Naive thymus-derived CD4-positive, alpha-beta T cell (primary cell): ENCODE measurements at regions of chr1 and their contacts with region 1.

Region 1: GRCh38 chr1:64136752-64137411 is 66.5 kb upstream of the UBE2U start:
- DNase-seq: peak; percentile 37 to 72 (median 58)
- ATAC-seq: peak; percentile 83
- H3K4me3 ChIP-seq: no peak overlapping the region
- H3K4me3 Mint-ChIP-seq: no peak overlapping the region
- H3K27ac ChIP-seq: no peak overlapping the region
- H3K27ac Mint-ChIP-seq: no peak overlapping the region
- H3K4me1 ChIP-seq: no peaks in the 10 kb centered on the region
- H3K4me1 Mint-ChIP-seq: no peaks in the 10 kb centered on the region
- H3K27me3 ChIP-seq: no peaks in the 10 kb centered on the region
- H3K27me3 Mint-ChIP-seq: peaks cover 0 to 12% (median 0%) of the 10 kb centered on the region in 5 donors

Region 2: DNA sequence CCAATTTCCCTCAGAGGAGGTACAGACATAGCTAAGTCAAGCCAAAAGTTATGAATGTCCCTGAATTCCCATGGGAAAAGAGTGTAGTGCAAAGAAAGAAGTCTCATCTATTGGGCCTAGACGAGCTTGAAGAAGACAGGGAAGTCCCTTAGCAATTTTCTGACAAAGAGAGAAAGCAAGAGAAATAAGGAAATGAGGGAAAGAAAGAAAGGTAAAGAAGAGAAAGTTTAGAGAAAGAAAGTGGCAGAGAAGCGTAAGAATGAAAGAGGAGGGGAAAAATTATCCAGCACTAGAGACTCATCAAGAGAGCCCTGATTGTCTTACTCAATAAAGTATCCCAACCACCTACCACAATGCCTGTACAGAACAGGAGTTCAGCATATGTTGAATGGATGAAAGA is 855.1 kb before region 1 on chr1:
- CTCF ChIA-PET with region 1: no interaction called
- POLR2A ChIA-PET with region 1: no interaction called
- intact Hi-C with region 1: no loop called
- DNase-seq: no peak
- ATAC-seq: no peak
- H3K4me3 ChIP-seq: no peak overlapping the region
- H3K4me3 Mint-ChIP-seq: no peak overlapping the region
- H3K27ac ChIP-seq: no peak overlapping the region
- H3K27ac Mint-ChIP-seq: no peak overlapping the region
- H3K4me1 ChIP-seq: no peaks in the 10 kb centered on the region
- H3K4me1 Mint-ChIP-seq: peaks cover 0 to 1% (median 0%) of the 10 kb centered on the region in 7 donors
- H3K27me3 ChIP-seq: no peaks in the 10 kb centered on the region
- H3K27me3 Mint-ChIP-seq: peaks cover 2 to 17% (median 14%) of the 10 kb centered on the region in 5 donors

Region 3: GRCh38 chr1:63575340-63575826 is 561.5 kb before region 1 on chr1:
- CTCF ChIA-PET with region 1: no interaction called
- POLR2A ChIA-PET with region 1: no interaction called
- intact Hi-C with region 1: loop called in 1 of 2 experiments (anchors 1 kb)
- DNase-seq: peak in 6 of 9 donors; percentile 12 to 40 (median 24)
- ATAC-seq: peak; percentile 52
- H3K4me3 ChIP-seq: no peak overlapping the region
- H3K4me3 Mint-ChIP-seq: no peak overlapping the region
- H3K27ac ChIP-seq: no peak overlapping the region
- H3K27ac Mint-ChIP-seq: no peak overlapping the region
- H3K4me1 ChIP-seq: no peaks in the 10 kb centered on the region
- H3K4me1 Mint-ChIP-seq: no peaks in the 10 kb centered on the region
- H3K27me3 ChIP-seq: no peaks in the 10 kb centered on the region
- H3K27me3 Mint-ChIP-seq: no peaks in the 10 kb centered on the region

Region 4: DNA sequence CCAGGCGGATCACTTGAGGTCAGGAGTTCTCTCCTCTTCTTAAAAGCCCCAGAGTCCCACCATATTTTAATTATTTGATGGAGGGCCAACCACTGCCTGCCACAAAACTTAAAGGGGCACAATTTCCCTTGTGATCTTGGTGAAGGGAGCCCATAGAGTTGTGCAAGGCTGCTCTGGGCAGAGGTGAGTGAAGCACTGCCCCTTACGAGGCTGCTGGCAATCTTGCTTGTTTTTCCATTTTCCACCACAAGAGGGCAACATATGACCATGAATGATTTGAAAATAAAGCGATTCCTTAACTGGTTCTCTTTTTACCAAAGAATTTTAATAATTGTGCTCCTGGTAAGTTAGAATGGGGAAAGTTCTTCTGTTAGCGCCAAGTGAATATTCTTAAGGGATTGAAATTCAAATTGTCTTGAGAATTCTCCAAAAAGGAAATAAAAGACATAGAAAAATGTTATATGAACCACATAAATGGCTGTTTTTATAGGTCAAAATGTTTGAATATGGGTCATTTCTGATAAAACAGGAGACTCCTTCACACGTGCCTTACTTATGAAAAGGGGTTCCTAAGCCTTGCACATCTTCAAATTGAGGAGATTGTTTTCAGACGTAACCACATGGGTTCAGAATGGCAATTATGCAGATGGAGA is 521.0 kb before region 1 on chr1:
- CTCF ChIA-PET with region 1: interaction called, 21 read pairs
- POLR2A ChIA-PET with region 1: interaction called, 4 read pairs
- intact Hi-C with region 1: loop called (anchors 1 kb)
- DNase-seq: peak; percentile 7 to 81 (median 62)
- ATAC-seq: peak; percentile 88
- H3K4me3 ChIP-seq: no peak overlapping the region
- H3K4me3 Mint-ChIP-seq: no peak overlapping the region
- H3K27ac ChIP-seq: no peak overlapping the region
- H3K27ac Mint-ChIP-seq: no peak overlapping the region
- H3K4me1 ChIP-seq: no peaks in the 10 kb centered on the region
- H3K4me1 Mint-ChIP-seq: peaks cover 0 to 15% (median 5%) of the 10 kb centered on the region in 7 donors
- H3K27me3 ChIP-seq: no peaks in the 10 kb centered on the region
- H3K27me3 Mint-ChIP-seq: no peaks in the 10 kb centered on the region

Region 5: GRCh38 chr1:63691701-63692425 is 445.0 kb before region 1 on chr1:
- CTCF ChIA-PET with region 1: interaction called, 9 read pairs
- POLR2A ChIA-PET with region 1: interaction called, 5 read pairs
- intact Hi-C with region 1: loop called (anchors 1 kb)
- DNase-seq: peak in 7 of 9 donors; percentile 4 to 47 (median 41)
- ATAC-seq: peak; percentile 49
- H3K4me3 ChIP-seq: no peak overlapping the region
- H3K4me3 Mint-ChIP-seq: no peak overlapping the region
- H3K27ac ChIP-seq: no peak overlapping the region
- H3K27ac Mint-ChIP-seq: no peak overlapping the region
- H3K4me1 ChIP-seq: no peaks in the 10 kb centered on the region
- H3K4me1 Mint-ChIP-seq: peaks cover 0 to 8% (median 6%) of the 10 kb centered on the region in 7 donors
- H3K27me3 ChIP-seq: no peaks in the 10 kb centered on the region
- H3K27me3 Mint-ChIP-seq: peaks cover 0 to 18% (median under 1%) of the 10 kb centered on the region in 5 donors

Region 6: GRCh38 chr1:63773815-63774616 is 362.9 kb before region 1 on chr1 and contains the start of gene ROR1:
- CTCF ChIA-PET with region 1: no interaction called
- POLR2A ChIA-PET with region 1: no interaction called
- intact Hi-C with region 1: loop called in 1 of 2 experiments (anchors 5 kb)
- DNase-seq: peak in 8 of 9 donors; percentile 7 to 73 (median 25)
- ATAC-seq: peak; percentile 74
- H3K4me3 ChIP-seq: no peak within 1 kb of the TSS
- H3K4me3 Mint-ChIP-seq: peak within 1 kb of the TSS; percentile 66 to 84 (median 78)
- H3K27ac ChIP-seq: no peak within 1 kb of the TSS
- H3K27ac Mint-ChIP-seq: no peak within 1 kb of the TSS
- H3K4me1 ChIP-seq: no peaks in the 10 kb centered on the region
- H3K4me1 Mint-ChIP-seq: peaks cover 10 to 20% (median 16%) of the 10 kb centered on the region in 7 donors
- H3K27me3 ChIP-seq: peaks cover 0 to 4% of the 10 kb centered on the region in 2 donors
- H3K27me3 Mint-ChIP-seq: peaks cover 61 to 75% (median 68%) of the 10 kb centered on the region in 5 donors
- total RNA-seq, gene ROR1: 0.07 to 0.22 (median 0.16) TPM in 3 of 5 experiments, not detected in the others

Region 7: DNA sequence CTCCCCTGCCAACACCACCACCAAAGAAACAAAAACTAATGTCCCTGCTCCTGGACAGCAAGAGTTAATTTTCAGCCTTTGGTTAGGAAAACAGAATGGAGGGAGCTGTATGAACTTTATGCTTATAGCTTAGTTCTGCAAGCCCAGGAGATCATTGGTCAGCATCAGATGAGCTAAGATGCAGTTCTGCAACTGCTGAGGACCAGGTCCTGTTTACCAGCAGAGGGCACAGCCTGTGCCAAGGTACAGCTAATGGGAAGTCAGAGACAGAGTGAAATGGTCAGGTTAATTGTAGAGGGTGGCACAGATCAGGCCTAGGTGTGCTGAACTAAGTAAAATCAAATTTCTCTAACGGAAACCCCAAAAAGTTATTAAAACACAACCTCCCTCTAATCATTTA is 201.7 kb before region 1 on chr1:
- CTCF ChIA-PET with region 1: interaction called, 9 read pairs
- POLR2A ChIA-PET with region 1: no interaction called
- intact Hi-C with region 1: loop called in 1 of 2 experiments (anchors 1 kb)
- DNase-seq: no peak
- ATAC-seq: no peak
- H3K4me3 ChIP-seq: no peak overlapping the region
- H3K4me3 Mint-ChIP-seq: no peak overlapping the region
- H3K27ac ChIP-seq: no peak overlapping the region
- H3K27ac Mint-ChIP-seq: no peak overlapping the region
- H3K4me1 ChIP-seq: no peaks in the 10 kb centered on the region
- H3K4me1 Mint-ChIP-seq: no peaks in the 10 kb centered on the region
- H3K27me3 ChIP-seq: no peaks in the 10 kb centered on the region
- H3K27me3 Mint-ChIP-seq: peaks cover 0 to 8% (median 2%) of the 10 kb centered on the region in 5 donors